HEK293T (cell line): ENCODE measurements at regions of chr1 and their contacts with region 1.

Region 1: GRCh38 chr1:155308493-155309422 is at the start of gene FDPS:
- DNase-seq: peak; percentile 98

Region 2: GRCh38 chr1:155323798-155324610 is 15.2 kb after region 1 on chr1:
- CTCF ChIA-PET with region 1: interaction called, 4 read pairs
- POLR2A ChIA-PET with region 1: interaction called, 11 read pairs
- DNase-seq: peak; percentile 95